ENCODE measurements at regions of chr9 and their contacts with region 1.

Region 1: DNA sequence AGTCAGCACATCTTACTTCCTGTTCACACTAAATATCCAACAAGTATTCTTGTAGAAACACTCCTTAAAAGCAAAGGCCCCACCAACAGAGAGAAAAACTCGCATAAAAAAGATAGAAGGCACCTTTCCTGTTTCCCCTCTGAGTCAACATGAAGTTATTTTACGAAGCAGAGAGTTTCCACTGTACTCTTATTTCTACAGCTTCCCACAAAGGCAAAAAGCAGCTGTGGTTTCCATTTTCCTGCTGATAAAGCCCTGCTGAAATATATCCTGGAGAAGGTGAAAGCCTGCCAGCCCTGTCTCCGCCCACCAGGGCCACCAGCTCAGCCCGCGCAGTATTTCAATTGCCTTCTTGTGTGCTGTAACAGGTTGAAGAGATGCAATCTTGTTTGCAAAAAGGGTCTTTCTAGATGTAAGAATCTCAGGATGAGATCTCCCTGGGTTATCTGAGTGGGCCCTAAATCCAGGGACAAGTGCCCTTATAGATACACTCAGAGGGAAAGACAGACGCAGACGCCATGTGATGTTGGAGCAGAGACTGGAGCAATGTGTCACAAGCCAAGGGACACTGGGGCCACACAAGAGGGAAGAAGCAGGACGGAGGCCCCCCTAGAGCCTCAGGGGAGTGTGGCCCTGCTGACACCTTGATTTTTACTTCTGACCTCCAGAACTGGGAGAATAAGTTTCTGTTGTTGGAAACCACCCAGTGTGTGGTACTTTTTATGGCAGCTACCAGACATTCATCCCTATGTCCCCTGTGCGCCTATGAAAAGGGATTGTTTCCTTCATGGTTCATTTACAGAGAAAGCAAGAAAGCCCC is 19.9 kb downstream of the SEMA4D start:
- DNase-seq: peak; percentile 89
- H3K4me3 Mint-ChIP-seq: peak overlapping the region; percentile 88
- H3K27ac Mint-ChIP-seq: peak overlapping the region; percentile 97
- H3K4me1 Mint-ChIP-seq: peaks cover 84% of the 10 kb centered on the region
- H3K27me3 Mint-ChIP-seq: no peaks in the 10 kb centered on the region

Region 2: GRCh38 chr9:89410641-89411350 is 67.2 kb before region 1 on chr9:
- intact Hi-C with region 1: loop called (anchors 1 kb)
- DNase-seq: peak; percentile 81
- H3K4me3 Mint-ChIP-seq: peak overlapping the region; percentile 76
- H3K27ac Mint-ChIP-seq: peak overlapping the region; percentile 96
- H3K4me1 Mint-ChIP-seq: peaks cover 87% of the 10 kb centered on the region
- H3K27me3 Mint-ChIP-seq: no peaks in the 10 kb centered on the region

Region 3: DNA sequence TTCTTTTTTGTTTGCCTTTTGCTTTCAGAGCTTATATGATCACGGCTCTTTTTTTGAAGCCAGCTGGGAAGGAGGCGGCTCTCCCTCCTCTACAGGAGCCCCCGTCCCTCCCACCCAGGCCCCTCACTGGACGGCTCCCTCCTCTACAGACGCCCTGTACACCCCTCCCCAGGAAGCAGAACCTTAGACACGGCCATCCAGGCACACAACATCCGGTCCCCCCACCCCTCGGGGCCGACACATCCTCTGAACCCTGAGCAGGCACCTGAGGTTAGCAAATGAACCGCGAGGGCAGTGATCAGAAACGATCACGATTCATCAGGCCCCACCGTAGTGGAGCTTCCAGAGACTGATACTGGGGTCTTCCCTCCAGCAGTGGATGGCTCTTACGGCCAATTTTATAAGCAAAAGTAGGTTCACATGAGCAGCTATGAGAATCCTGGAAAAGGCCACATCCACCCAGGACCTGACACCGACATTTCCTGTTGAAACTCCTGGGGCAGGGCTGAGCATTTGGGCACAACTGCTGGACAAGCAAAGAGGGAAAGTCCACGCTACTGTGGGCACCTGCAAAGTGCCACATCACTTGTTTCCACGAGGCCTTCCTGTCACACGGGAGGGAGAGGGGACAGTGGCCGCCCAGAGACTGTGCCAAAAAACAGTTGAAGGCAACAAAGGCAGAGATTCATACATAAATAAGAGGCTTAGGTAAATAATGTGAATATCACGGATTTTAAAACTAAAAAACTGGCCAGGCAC is 59.0 kb before region 1 on chr9:
- intact Hi-C with region 1: loop called (anchors 1 kb)
- DNase-seq: peak; percentile 92
- H3K4me3 Mint-ChIP-seq: peak overlapping the region; percentile 93
- H3K27ac Mint-ChIP-seq: peak overlapping the region; percentile 86
- H3K4me1 Mint-ChIP-seq: peaks cover 82% of the 10 kb centered on the region
- H3K27me3 Mint-ChIP-seq: no peaks in the 10 kb centered on the region

Region 4: GRCh38 chr9:89536145-89536574 is 58.1 kb after region 1 on chr9:
- intact Hi-C with region 1: loop called (anchors 2 kb)
- DNase-seq: peak; percentile 83
- H3K4me3 Mint-ChIP-seq: peak overlapping the region; percentile 73
- H3K27ac Mint-ChIP-seq: peak overlapping the region; percentile 90
- H3K4me1 Mint-ChIP-seq: peaks cover 80% of the 10 kb centered on the region
- H3K27me3 Mint-ChIP-seq: no peaks in the 10 kb centered on the region

Region 5: DNA sequence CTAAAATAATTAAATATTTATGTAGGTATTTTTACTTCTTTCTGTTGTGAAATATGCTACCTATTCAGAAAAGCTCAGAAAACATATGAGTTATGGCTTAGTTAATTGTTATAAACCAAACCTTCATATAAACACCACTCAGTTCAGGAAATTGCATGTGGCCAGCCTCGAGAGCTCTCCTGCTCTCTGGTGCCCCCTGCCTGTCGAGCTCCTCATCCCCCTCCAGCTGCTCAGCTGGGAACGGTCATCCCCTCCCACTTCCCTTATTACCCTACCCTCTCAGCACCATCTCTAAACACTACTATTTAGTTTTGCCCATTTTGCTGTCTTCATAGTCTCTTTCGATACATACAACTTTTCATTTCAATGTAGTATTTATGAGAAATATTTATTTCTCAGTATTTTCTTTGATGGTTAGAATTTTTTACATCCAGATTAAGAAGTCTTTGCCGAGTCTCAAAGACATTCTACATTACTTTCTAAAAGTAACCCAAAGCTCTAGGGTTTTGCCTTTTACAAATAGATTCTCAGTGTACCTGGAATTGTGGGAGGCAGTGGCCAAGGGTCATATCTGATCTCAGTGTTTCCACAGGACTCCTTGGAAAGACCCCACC is 71.1 kb after region 1 on chr9:
- intact Hi-C with region 1: loop called (anchors 1 kb)
- DNase-seq: peak; percentile 95
- H3K4me3 Mint-ChIP-seq: peak overlapping the region; percentile 28
- H3K27ac Mint-ChIP-seq: peak overlapping the region; percentile 62
- H3K4me1 Mint-ChIP-seq: peaks cover 19% of the 10 kb centered on the region
- H3K27me3 Mint-ChIP-seq: peaks cover 11% of the 10 kb centered on the region